ACHN (cell line): ENCODE measurements at regions of chr3 and their contacts with region 1.

Region 1: DNA sequence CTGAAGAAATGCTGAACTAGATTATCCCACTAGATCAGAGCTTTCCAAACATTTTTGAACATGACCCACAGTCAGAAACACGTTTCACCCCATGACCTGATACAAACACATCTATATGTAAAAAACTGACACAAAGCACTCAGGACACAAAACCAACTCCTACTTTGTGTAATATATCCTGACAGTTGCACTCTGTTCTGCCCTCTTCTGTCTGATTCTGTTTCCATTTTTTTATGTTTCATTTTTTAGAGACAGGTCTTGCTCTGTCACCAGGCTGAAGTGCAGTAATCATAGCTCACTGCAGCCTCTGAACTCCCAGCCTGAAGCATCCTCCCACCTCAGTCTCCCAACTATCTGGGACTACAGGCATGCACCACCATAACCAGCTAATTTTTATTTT is 15.8 kb upstream of the RFTN1 start:
- DNase-seq: no peak

Region 2: GRCh38 chr3:16264708-16265454 is 264.4 kb before region 1 on chr3 and contains the starts of genes DPH3 and OXNAD1:
- in situ Hi-C with region 1: loop called (anchors 25 kb)
- DNase-seq: peak; percentile 98